ENCODE measurements at regions of chr1 and their contacts with region 1.

Region 1: GRCh38 chr1:88891318-88891950 is at the start of gene GTF2B:
- DNase-seq: peak; percentile 89
- ATAC-seq: peak; percentile 73
- H3K4me3 ChIP-seq: peak within 1 kb of the TSS; percentile 84 to 96 (median 87)
- H3K27ac ChIP-seq: peak within 1 kb of the TSS; percentile 88
- H3K4me1 ChIP-seq: peaks cover 31% of the 10 kb centered on the region
- H3K27me3 ChIP-seq: no peaks in the 10 kb centered on the region; a peak in 1 of 5 replicates
- CTCF ChIP-seq: peak; percentile 5; the same call in 1 of the 2 replicates
- EP300 ChIP-seq: no peak
- POLR2A ChIP-seq: peak; percentile 99
- RAD21 ChIP-seq: peak; percentile 27; the same call in 1 of the 2 replicates
- total RNA-seq, gene GTF2B: 43.4 and 68.0 TPM in 2 replicates

Region 2: DNA sequence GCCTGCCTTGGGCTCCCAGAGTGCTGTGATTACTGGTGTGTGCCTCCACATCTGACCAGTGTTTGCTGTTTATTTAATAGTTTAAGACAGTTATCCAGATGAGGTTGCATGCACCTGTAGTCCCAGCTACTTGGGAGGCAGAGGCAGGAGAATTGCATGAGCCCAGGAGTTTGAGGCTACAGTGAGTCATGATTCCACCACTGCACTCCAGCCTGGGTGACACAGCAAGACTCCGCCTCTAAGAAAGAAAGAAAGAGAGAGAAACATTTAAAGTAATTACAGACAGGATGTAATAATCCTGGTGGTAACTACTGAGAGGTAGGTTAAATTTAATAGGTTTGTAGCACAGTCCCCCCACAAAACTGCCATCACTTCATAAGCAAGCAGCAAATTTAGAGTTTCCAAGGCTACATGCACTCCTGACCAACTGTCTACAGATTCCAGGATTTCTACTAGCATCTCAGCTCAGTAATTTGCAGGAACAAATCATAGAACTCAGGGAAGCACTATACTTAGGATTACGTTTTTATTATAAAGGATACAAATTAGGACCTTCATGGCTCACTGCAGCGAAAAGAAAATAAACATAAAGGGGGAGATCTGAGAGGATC is 117.8 kb before region 1 on chr1:
- CTCF ChIA-PET with region 1: no interaction called
- POLR2A ChIA-PET with region 1: no interaction called
- in situ Hi-C with region 1: no loop called
- intact Hi-C with region 1: no loop called
- DNase-seq: peak; percentile 2
- ATAC-seq: no peak
- H3K4me3 ChIP-seq: no peak overlapping the region
- H3K27ac ChIP-seq: no peak overlapping the region
- H3K4me1 ChIP-seq: no peaks in the 10 kb centered on the region
- H3K27me3 ChIP-seq: no peaks in the 10 kb centered on the region
- CTCF ChIP-seq: no peak
- EP300 ChIP-seq: no peak
- POLR2A ChIP-seq: no peak
- RAD21 ChIP-seq: no peak

Region 3: DNA sequence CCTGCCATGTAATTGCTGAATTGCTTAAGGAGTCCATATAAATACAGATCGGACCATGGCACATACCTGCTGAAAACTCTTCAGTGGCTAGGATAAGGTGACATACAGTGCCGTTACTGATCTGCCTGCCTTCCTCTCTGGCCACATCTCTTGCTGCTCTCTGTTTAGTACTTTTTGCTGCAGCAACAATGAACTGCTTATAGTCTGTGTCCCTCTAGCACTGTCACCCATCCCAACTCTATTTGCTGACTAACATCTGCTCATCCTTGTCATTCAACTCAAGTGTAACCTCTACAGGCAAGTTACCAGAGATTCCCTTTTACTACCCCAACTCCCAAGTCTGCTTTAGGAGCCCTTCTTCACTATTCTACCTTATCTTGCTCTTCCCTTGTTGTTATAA is 65.7 kb before region 1 on chr1:
- CTCF ChIA-PET with region 1: no interaction called
- POLR2A ChIA-PET with region 1: no interaction called
- in situ Hi-C with region 1: no loop called
- intact Hi-C with region 1: no loop called
- DNase-seq: no peak
- ATAC-seq: no peak
- H3K4me3 ChIP-seq: no peak overlapping the region
- H3K27ac ChIP-seq: no peak overlapping the region
- H3K4me1 ChIP-seq: no peaks in the 10 kb centered on the region
- H3K27me3 ChIP-seq: no peaks in the 10 kb centered on the region
- CTCF ChIP-seq: no peak
- EP300 ChIP-seq: no peak
- POLR2A ChIP-seq: no peak
- RAD21 ChIP-seq: no peak

Region 4: DNA sequence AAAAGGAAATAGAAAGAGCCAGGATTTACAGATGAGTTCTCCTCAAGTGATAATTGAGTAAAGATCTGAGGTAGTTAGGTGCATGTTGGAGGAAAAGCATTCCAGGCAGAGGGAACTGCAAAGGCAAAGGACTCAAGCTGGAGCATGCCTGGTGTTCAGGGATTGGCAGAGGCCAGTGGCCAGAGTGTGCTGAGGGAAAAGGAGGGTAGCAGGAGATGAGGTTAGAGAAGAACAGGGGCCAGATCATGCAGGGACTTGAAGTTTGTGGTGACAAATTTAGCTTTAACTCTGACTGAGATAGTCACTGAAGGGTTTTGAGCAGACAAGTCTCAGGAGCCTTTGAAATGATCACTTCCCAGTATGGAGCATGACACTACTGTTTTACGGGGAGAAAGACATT is 19.0 kb after region 1 on chr1:
- CTCF ChIA-PET with region 1: no interaction called
- POLR2A ChIA-PET with region 1: interaction called, 12 read pairs
- in situ Hi-C with region 1: no loop called
- intact Hi-C with region 1: no loop called
- DNase-seq: no peak
- ATAC-seq: no peak
- H3K4me3 ChIP-seq: no peak overlapping the region
- H3K27ac ChIP-seq: no peak overlapping the region
- H3K4me1 ChIP-seq: peaks cover 24% of the 10 kb centered on the region
- H3K27me3 ChIP-seq: no peaks in the 10 kb centered on the region
- CTCF ChIP-seq: no peak
- EP300 ChIP-seq: no peak
- POLR2A ChIP-seq: no peak
- RAD21 ChIP-seq: no peak

Region 5: DNA sequence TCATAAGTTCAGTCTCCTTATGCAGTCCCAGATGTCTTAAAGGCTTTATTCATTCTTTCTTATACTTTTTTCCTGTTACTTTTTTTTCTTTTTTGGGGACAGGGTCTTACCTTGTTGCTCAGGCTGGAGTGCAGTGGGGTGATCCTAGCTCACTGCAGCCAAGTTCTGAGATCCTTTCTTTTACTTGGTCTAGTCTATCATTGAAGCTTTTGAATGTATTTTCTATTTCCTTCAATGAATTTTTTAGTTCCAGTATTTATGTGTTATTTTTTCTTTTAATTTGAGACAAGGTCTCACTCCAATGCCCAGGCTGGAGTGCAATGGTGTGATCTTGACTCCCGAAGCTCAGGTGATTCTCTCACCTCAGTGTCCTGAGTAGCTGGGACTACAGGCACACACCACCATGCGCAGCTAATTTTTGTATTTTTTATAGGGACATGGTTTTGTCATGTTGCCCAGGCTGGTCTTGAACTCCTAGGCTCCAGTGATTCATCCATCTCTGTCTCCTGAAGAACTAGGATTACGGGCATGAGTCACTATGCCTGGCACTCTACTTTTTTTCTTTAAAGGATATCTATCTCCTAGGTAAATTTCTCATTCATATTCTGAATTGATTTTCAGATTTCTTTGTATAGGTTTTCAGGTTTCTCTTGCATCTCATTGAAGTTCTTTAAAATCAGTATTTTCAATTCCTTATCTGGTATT is 26.0 kb after region 1 on chr1:
- CTCF ChIA-PET with region 1: no interaction called
- POLR2A ChIA-PET with region 1: interaction called, 13 read pairs
- in situ Hi-C with region 1: no loop called
- intact Hi-C with region 1: loop called (anchors 2 kb)
- DNase-seq: no peak
- ATAC-seq: no peak
- H3K4me3 ChIP-seq: no peak overlapping the region
- H3K27ac ChIP-seq: no peak overlapping the region
- H3K4me1 ChIP-seq: peaks cover 26% of the 10 kb centered on the region
- H3K27me3 ChIP-seq: no peaks in the 10 kb centered on the region
- CTCF ChIP-seq: no peak
- EP300 ChIP-seq: no peak
- POLR2A ChIP-seq: no peak
- RAD21 ChIP-seq: no peak

Region 6: DNA sequence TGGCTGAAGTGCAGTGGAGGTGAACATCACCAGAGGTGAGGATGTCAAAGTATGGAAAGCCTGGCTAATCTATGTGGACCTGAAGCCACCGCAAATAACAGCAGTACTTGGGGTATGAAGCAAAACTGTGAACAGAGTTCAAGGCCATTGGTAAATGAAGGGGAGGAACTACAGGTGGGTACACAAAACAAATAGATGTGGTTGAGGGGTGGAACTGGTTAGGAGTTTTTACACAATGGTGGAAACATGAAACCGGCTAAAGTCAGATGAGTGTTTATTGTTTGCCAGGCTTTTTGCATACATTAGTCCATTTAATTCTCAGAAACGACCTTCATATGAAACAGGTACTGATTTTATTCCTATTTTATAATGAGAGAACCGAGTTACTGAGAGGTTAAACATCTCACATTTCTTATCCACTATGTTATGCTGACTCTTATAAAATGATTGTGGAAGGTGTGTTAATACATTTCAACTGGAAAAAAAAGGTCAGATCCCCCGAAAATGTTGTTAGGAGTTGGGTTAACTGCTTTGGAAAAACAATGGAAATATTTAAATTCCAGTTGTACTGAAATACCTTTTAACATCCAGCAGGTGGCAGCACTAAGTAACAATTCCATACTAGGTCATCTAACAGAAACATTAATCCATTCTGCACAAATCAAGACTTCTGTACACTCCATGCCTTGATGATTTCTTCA is 44.2 kb after region 1 on chr1:
- CTCF ChIA-PET with region 1: no interaction called
- POLR2A ChIA-PET with region 1: interaction called, 4 read pairs
- in situ Hi-C with region 1: no loop called
- intact Hi-C with region 1: loop called (anchors 2 kb)
- DNase-seq: peak; percentile 93
- ATAC-seq: peak; percentile 95
- H3K4me3 ChIP-seq: no peak overlapping the region; a peak in 1 of 6 replicates
- H3K27ac ChIP-seq: peak overlapping the region; percentile 63
- H3K4me1 ChIP-seq: peaks cover 14% of the 10 kb centered on the region
- H3K27me3 ChIP-seq: no peaks in the 10 kb centered on the region
- CTCF ChIP-seq: peak; percentile 68
- EP300 ChIP-seq: peak in 1 of 2 experiments; percentile 77; a peak in 2 of 4 replicates
- POLR2A ChIP-seq: no peak
- RAD21 ChIP-seq: no peak

Region 7: GRCh38 chr1:88983791-88984559 is 92.5 kb after region 1 on chr1:
- CTCF ChIA-PET with region 1: no interaction called
- POLR2A ChIA-PET with region 1: no interaction called
- in situ Hi-C with region 1: no loop called
- intact Hi-C with region 1: loop called (anchors 5 kb)
- DNase-seq: peak; percentile 71
- ATAC-seq: peak; percentile 70
- H3K4me3 ChIP-seq: no peak overlapping the region
- H3K27ac ChIP-seq: peak overlapping the region; percentile 35
- H3K4me1 ChIP-seq: peaks cover 62% of the 10 kb centered on the region
- H3K27me3 ChIP-seq: no peaks in the 10 kb centered on the region
- CTCF ChIP-seq: peak; percentile 54
- EP300 ChIP-seq: no peak
- POLR2A ChIP-seq: no peak
- RAD21 ChIP-seq: peak; percentile 43; the same call in 1 of the 2 replicates

Measured in HepG2 (cell line).